ENCODE measurements at regions of chr7 and their contacts with region 1.

Region 1: DNA sequence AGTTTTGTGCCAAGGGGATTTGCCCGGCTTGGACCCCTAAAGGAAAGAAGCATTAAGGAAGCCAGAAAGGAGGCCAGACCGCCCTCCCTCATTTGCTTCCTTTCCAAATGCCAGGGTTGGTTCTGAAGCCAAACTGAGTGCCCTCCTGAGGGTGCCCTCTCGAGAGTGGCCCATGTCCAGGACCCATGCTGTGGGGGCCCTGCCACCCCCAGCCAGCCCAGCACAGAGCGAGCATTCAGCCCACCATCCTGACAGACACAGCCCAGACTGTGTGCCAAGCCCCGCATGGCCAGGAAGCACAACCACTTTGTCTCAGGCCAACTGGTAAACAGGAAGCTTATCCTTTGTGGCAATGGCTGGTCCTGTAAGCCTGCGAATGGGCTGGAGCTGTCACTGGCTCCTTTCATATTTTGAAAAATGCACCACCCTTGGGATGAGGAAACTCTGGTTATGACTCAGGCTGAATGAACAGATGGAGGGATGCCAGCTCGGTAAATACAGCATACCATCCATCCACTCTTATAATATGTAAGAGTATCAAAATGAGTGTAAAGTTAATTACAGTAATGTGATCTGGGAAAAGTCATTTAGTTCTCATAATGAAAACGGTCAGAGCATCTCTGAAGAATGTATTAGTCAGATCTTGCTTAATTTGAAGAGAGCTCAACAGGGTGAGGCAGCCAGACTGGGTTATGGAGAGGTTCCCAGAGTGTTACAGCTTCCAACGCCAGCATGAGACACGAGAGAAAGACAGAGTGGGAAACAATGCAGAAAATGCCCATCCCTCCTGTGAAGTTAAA is 65.0 kb downstream of the STK17A start:
- DNase-seq: peak in 3 of 9 donors; percentile 34 to 53 (median 50)
- ATAC-seq: peak; percentile 2
- H3K4me3 ChIP-seq: peak overlapping the region; percentile 22
- H3K4me3 Mint-ChIP-seq: peak overlapping the region; percentile 78 to 91 (median 83)
- H3K27ac ChIP-seq: peak overlapping the region; percentile 80
- H3K27ac Mint-ChIP-seq: peak overlapping the region in 8 of 9 donors; percentile 90 to 100 (median 98)
- H3K4me1 ChIP-seq: peaks cover 88 to 89% of the 10 kb centered on the region in 2 donors
- H3K4me1 Mint-ChIP-seq: peaks cover 78 to 98% (median 95%) of the 10 kb centered on the region in 7 donors
- H3K27me3 ChIP-seq: no peaks in the 10 kb centered on the region
- H3K27me3 Mint-ChIP-seq: no peaks in the 10 kb centered on the region

Region 2: DNA sequence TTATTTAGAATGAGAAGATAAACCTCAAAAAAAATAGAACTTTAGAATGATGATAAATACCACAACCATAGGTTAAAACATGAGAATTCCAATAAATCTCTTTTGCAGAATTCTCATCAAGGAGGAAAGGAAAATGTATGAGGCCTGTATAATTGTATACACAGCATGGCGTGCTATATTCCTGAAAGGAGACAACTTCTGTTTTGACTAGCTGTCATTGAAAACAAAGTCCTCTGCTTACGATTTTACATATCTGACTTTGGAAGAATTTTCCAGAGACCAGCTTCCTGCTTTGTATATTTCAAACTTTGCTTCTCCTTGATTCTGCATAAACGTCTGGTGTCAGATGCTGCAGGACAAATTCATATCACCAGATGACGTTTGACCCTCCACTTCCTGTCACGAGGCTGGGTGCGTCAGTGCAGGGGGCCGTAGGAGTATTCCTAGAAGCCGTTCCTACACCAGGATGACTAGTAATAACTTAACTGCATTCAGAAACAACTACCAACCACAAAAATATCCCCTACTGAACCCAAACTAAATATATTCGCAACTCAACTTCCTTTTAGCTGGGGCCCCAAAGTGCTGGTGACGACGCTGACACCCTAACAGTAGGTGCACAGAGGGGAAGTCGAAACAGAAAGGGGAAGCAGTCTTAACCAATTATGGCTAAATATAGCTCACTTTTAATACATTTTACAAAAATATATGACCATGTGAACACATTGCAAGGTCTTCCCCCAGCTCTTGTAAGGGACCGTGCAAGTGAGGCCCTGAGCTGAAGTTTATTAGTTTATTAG is 1766.3 kb before region 1 on chr7:
- CTCF ChIA-PET with region 1: no interaction called
- POLR2A ChIA-PET with region 1: no interaction called
- intact Hi-C with region 1: loop called in 1 of 2 experiments (anchors 5 kb)
- DNase-seq: peak; percentile 27 to 85 (median 64)
- ATAC-seq: peak; percentile 93
- H3K4me3 ChIP-seq: peak overlapping the region; percentile 50
- H3K4me3 Mint-ChIP-seq: peak overlapping the region; percentile 60 to 89 (median 78)
- H3K27ac ChIP-seq: peak overlapping the region; percentile 64
- H3K27ac Mint-ChIP-seq: peak overlapping the region; percentile 84 to 99 (median 94)
- H3K4me1 ChIP-seq: peaks cover 7 to 13% of the 10 kb centered on the region in 2 donors
- H3K4me1 Mint-ChIP-seq: peaks cover 10 to 35% (median 22%) of the 10 kb centered on the region in 7 donors
- H3K27me3 ChIP-seq: no peaks in the 10 kb centered on the region
- H3K27me3 Mint-ChIP-seq: peaks cover 0 to 6% (median 0%) of the 10 kb centered on the region in 5 donors

Region 3: GRCh38 chr7:43602271-43602670 is 45.6 kb before region 1 on chr7:
- CTCF ChIA-PET with region 1: no interaction called
- POLR2A ChIA-PET with region 1: interaction called, 26 read pairs
- intact Hi-C with region 1: no loop called
- DNase-seq: no peak
- ATAC-seq: no peak
- H3K4me3 ChIP-seq: no peak overlapping the region
- H3K4me3 Mint-ChIP-seq: no peak overlapping the region
- H3K27ac ChIP-seq: peak overlapping the region; percentile 49
- H3K27ac Mint-ChIP-seq: no peak overlapping the region
- H3K4me1 ChIP-seq: peaks cover 63 to 65% of the 10 kb centered on the region in 2 donors
- H3K4me1 Mint-ChIP-seq: peaks cover 26 to 50% (median 29%) of the 10 kb centered on the region in 7 donors
- H3K27me3 ChIP-seq: no peaks in the 10 kb centered on the region
- H3K27me3 Mint-ChIP-seq: no peaks in the 10 kb centered on the region

Region 4: DNA sequence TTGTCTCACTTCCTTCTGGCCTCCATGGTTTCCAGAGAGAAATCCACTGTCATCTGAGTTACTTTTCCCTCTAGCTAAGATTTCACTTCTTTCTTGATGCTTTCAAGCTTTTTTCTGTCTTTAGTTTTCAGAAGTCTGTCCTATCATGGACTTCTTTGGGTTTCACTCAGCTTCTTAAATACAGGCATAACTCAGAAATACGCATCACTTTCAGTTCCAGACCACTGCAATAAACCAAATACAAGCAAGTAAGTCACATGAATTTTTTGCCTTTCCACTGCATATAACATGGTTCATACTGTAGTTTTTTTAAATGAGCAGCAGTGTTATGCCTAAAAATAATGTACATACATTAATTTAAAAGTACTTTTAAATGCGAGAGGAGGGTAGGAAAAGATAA is 16.3 kb before region 1 on chr7:
- CTCF ChIA-PET with region 1: interaction called, 8 read pairs
- POLR2A ChIA-PET with region 1: interaction called, 210 read pairs
- intact Hi-C with region 1: loop called (anchors 1 to 2 kb)
- DNase-seq: peak in 2 of 9 donors; percentile 36 to 42
- ATAC-seq: peak; percentile 54
- H3K4me3 ChIP-seq: no peak overlapping the region
- H3K4me3 Mint-ChIP-seq: peak overlapping the region; percentile 40 to 78 (median 68)
- H3K27ac ChIP-seq: peak overlapping the region; percentile 53
- H3K27ac Mint-ChIP-seq: peak overlapping the region in 8 of 9 donors; percentile 64 to 100 (median 92)
- H3K4me1 ChIP-seq: peaks cover 44 to 71% of the 10 kb centered on the region in 2 donors
- H3K4me1 Mint-ChIP-seq: peaks cover 49 to 94% (median 76%) of the 10 kb centered on the region in 7 donors
- H3K27me3 ChIP-seq: no peaks in the 10 kb centered on the region
- H3K27me3 Mint-ChIP-seq: no peaks in the 10 kb centered on the region

Region 5: GRCh38 chr7:43669286-43670081 is 21.6 kb after region 1 on chr7:
- CTCF ChIA-PET with region 1: interaction called, 9 read pairs
- POLR2A ChIA-PET with region 1: interaction called, 12 read pairs
- intact Hi-C with region 1: loop called (anchors 1 to 2 kb)
- DNase-seq: peak in 7 of 9 donors; percentile 30 to 56 (median 47)
- ATAC-seq: peak; percentile 86
- H3K4me3 ChIP-seq: no peak overlapping the region
- H3K4me3 Mint-ChIP-seq: peak overlapping the region; percentile 39 to 81 (median 66)
- H3K27ac ChIP-seq: peak overlapping the region; percentile 53
- H3K27ac Mint-ChIP-seq: peak overlapping the region; percentile 67 to 93 (median 88)
- H3K4me1 ChIP-seq: peaks cover 10 to 29% of the 10 kb centered on the region in 2 donors
- H3K4me1 Mint-ChIP-seq: peaks cover 39 to 95% (median 91%) of the 10 kb centered on the region in 7 donors
- H3K27me3 ChIP-seq: no peaks in the 10 kb centered on the region
- H3K27me3 Mint-ChIP-seq: no peaks in the 10 kb centered on the region

Measured in naive thymus-derived CD4-positive, alpha-beta T cell (primary cell).